Heart right ventricle (tissue), 16 donors: ENCODE measurements at regions of chr6 and their contacts with region 1.

Region 1: DNA sequence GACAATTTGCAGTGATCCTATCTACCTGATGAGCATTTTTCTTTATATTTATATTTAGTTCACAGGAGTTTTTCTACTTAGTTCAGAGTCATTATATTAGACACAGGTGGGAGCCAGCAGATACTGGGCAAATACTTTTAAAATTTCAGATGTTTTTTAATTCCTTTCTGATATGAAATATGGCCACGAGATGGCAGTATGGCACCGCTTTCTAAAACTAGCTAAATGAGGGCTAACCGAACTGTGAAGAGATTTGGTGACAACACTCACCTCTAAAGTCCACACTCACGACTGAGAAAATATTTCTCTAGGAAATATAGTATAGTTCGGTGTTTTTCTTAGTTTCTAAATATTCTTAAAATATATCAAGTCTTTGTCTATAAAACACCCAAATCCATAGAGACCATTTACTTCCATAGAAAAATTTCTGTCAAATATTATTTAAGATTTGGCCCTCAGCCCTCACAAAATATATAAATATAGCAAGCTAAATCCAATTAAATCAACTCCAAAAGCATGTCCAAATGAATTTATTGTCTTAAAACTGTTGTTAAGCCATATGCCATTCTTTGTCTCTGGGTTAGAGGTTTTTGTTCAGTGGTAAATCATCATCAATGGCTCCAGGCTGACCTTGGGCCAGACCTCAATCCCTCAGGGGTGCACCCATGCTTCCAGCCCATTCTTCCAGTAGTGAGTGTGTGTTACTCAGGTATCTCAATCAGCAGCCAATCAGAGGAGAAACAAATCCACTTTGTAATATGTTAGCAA is 63.6 kb downstream of the HUS1B start:
- DNase-seq: peak in 1 of 2 donors; percentile 58
- ATAC-seq: peak in 1 of 8 donors; percentile 37
- H3K4me3 ChIP-seq: no peak overlapping the region
- H3K27ac ChIP-seq: no peak overlapping the region
- H3K4me1 ChIP-seq: peaks cover 0 to 4% (median 0%) of the 10 kb centered on the region in 9 donors
- H3K27me3 ChIP-seq: no peaks in the 10 kb centered on the region
- CTCF ChIP-seq: peak; percentile 65 to 81 (median 70)

Region 2: DNA sequence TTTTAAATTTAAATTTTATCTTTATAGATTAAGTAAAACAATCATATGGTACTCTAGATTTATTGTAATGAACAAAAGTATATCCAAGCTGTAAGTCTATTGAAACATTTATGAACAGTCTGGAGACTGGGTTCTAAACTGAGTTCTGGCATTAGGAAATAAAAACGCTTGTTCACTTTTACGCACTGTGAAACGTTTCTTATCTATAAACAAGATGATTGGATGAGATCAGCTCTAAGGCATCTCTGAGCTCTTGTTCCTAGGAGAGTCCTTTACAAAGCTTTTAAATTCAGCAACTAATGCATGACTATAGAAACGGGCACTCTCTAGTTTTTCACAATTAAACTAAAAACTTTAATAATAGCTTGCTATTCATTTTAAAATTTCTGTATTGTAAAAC is 56.8 kb after region 1 on chr6:
- intact Hi-C with region 1: loop called in 1 of 10 experiments (anchors 1 kb)
- DNase-seq: no peak
- ATAC-seq: no peak
- H3K4me3 ChIP-seq: no peak overlapping the region
- H3K27ac ChIP-seq: no peak overlapping the region
- H3K4me1 ChIP-seq: peaks cover 0 to 5% (median 0%) of the 10 kb centered on the region in 9 donors
- H3K27me3 ChIP-seq: no peaks in the 10 kb centered on the region
- CTCF ChIP-seq: no peak

Region 3: GRCh38 chr6:722077-722524 is 128.8 kb after region 1 on chr6:
- intact Hi-C with region 1: loop called in 8 of 10 experiments (anchors 10 kb)
- DNase-seq: peak; percentile 65 to 67
- ATAC-seq: peak in 5 of 8 donors; percentile 49 to 75 (median 72)
- H3K4me3 ChIP-seq: no peak overlapping the region
- H3K27ac ChIP-seq: no peak overlapping the region
- H3K4me1 ChIP-seq: peaks cover 0 to 5% (median 0%) of the 10 kb centered on the region in 9 donors
- H3K27me3 ChIP-seq: peaks cover 0 to 6% (median 0%) of the 10 kb centered on the region in 7 donors
- CTCF ChIP-seq: peak; percentile 76 to 95 (median 91)

Region 4: GRCh38 chr6:797479-798077 is 204.3 kb after region 1 on chr6:
- intact Hi-C with region 1: loop called in 1 of 10 experiments (anchors 5 kb)
- DNase-seq: peak in 1 of 2 donors; percentile 55
- ATAC-seq: peak in 3 of 8 donors; percentile 41 to 64 (median 53)
- H3K4me3 ChIP-seq: no peak overlapping the region
- H3K27ac ChIP-seq: no peak overlapping the region
- H3K4me1 ChIP-seq: no peaks in the 10 kb centered on the region
- H3K27me3 ChIP-seq: peaks cover 0 to 92% (median 83%) of the 10 kb centered on the region in 7 donors
- CTCF ChIP-seq: peak; percentile 60 to 89 (median 80)

Region 5: GRCh38 chr6:1396952-1397868 is 803.9 kb after region 1 on chr6:
- intact Hi-C with region 1: loop called in 7 of 10 experiments (anchors 2 to 10 kb)
- DNase-seq: peak; percentile 45 to 65
- ATAC-seq: peak in 5 of 8 donors; percentile 52 to 73 (median 69)
- H3K4me3 ChIP-seq: no peak overlapping the region
- H3K27ac ChIP-seq: no peak overlapping the region
- H3K4me1 ChIP-seq: peaks cover 0 to 17% (median 0%) of the 10 kb centered on the region in 9 donors
- H3K27me3 ChIP-seq: peaks cover 26 to 99% (median 93%) of the 10 kb centered on the region in 7 donors
- CTCF ChIP-seq: peak; percentile 82 to 98 (median 95)